Right cardiac atrium (tissue), 5 donors: ENCODE measurements at regions of chr15 and their contacts with region 1.

Region 1: GRCh38 chr15:58227706-58228543 is 89.7 kb downstream of the AQP9 start:
- DNase-seq: peak; percentile 79 to 90 (median 86)
- ATAC-seq: peak in 1 of 2 donors; percentile 78
- H3K4me3 ChIP-seq: no peak overlapping the region
- H3K27ac ChIP-seq: peak overlapping the region; percentile 92
- H3K4me1 ChIP-seq: peaks cover 7% of the 10 kb centered on the region
- H3K27me3 ChIP-seq: no peaks in the 10 kb centered on the region

Region 2: DNA sequence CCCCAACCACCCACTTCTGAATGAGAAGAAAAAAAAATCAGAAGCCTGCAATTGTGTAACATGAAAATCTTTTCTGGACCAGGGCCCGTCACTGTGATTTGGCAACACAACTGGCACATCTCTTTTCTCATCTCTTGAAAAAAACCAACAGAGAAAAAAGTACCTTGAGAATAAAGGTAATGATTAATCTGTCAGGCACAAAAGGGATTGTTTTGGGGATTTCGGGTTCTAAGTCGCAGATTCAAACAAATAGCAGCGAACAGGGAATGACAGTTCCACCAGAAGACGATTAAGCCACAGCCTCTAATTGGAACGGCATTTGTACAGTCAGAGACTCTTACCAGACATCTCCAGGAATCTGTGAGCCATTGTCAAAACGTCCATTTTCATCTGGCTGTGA is 89.8 kb before region 1 on chr15 and contains the start of gene AQP9:
- intact Hi-C with region 1: no loop called
- DNase-seq: peak in 1 of 3 donors; percentile 10
- ATAC-seq: no peak
- H3K4me3 ChIP-seq: no peak within 1 kb of the TSS
- H3K27ac ChIP-seq: no peak within 1 kb of the TSS
- H3K4me1 ChIP-seq: peaks cover 1% of the 10 kb centered on the region
- H3K27me3 ChIP-seq: no peaks in the 10 kb centered on the region
- total RNA-seq, gene AQP9: 0.58 to 0.97 (median 0.68) TPM

Region 3: GRCh38 chr15:58438956-58439355 is 211.0 kb after region 1 on chr15:
- intact Hi-C with region 1: loop called in 1 of 4 experiments (anchors 10 kb)
- DNase-seq: peak in 1 of 3 donors; percentile 66
- ATAC-seq: peak; percentile 52 to 57
- H3K4me3 ChIP-seq: no peak overlapping the region
- H3K27ac ChIP-seq: peak overlapping the region; percentile 25
- H3K4me1 ChIP-seq: peaks cover 25% of the 10 kb centered on the region
- H3K27me3 ChIP-seq: no peaks in the 10 kb centered on the region

Region 4: DNA sequence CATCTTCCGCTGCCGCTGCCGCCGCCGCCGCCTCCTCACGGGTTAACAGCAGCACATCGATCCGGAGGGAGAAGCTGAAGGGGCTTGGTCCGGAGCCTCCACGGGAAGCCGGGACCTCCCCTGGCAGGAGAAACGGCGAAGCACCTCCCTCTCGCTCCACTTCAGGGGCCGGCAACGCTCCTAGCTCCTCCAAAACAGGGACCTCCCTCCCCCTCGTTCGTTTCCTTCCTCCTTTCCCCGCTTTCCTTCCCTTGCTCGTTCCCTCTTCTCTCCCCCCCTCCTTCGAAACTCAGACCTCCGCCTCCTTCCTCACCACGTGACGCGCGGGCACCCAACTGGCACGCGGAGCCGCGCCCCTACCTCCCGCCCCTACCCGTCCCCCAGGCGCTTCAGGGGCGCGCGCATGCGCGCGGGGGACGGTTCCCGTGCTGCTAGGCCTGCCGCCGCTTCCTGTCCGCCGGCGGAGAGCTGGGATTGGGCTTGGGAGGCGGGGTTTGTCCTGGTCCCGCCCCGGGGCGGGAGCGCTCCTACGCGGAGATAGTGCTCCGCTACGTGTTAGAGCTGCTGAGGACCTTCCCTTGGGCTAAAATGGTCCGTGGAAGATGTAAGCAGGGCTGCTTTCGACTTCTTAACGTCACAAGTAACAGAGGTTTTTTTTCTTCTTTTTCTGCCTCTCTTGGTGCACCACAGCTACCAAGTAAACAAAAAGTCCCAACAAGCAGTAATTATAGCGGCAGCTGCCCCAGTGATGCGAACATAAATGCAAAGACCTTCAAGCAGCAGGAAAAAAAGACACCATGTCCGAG is 521.8 kb after region 1 on chr15 and contains the start of gene ADAM10:
- intact Hi-C with region 1: loop called in 1 of 4 experiments (anchors 10 kb)
- DNase-seq: peak; percentile 100
- ATAC-seq: peak; percentile 99
- H3K4me3 ChIP-seq: peak within 1 kb of the TSS; percentile 88
- H3K27ac ChIP-seq: peak within 1 kb of the TSS; percentile 91
- H3K4me1 ChIP-seq: no peaks in the 10 kb centered on the region
- H3K27me3 ChIP-seq: no peaks in the 10 kb centered on the region
- total RNA-seq, gene ADAM10: 91.8 to 103 (median 94.5) TPM